OCI-LY7 (cell line): ENCODE measurements at regions of chr13 and their contacts with region 1.

Region 1: GRCh38 chr13:42594970-42595571 is 21.1 kb downstream of the TNFSF11 start:
- DNase-seq: peak; percentile 71
- H3K4me3 ChIP-seq: no peak overlapping the region
- H3K27ac ChIP-seq: no peak overlapping the region
- H3K4me1 ChIP-seq: peaks cover 4% of the 10 kb centered on the region
- CTCF ChIP-seq: peak; percentile 97

Region 2: DNA sequence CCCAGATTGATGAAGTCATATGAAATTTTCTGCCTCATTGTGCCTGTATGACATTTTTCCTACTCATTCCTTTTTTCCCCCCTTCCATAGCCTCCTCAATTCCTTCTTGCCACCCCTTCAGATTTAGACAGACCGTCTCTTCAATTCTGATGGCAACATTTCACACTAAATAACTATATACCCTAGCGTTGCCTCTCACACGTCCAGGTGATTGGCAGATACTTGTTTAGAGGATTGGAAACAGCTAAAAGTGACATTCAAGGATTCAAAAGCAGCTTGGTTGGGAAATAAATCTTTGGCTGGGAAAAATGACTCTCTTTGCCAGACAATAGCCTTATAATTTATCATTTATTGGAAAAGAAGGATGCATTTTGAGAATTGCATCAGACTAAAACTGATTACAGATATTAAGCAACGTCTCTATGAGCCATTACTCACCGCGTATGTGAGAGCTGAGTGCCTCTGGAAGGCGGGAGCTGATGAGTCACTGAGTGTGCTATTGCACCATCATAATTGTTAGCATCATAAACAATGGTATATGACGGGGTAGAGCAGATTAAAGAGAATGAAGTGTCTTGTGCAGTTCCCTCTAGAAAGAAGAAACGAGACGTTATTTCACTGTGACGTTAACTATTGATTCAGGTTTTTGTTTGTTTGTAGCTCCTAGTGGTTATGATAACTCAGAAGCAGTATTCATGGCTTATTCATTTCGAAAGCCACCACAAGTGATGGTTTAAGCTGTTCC is 125.2 kb after region 1 on chr13:
- CTCF ChIA-PET with region 1: no interaction called
- POLR2A ChIA-PET with region 1: no interaction called
- intact Hi-C with region 1: loop called (anchors 10 kb)
- DNase-seq: no peak
- H3K4me3 ChIP-seq: no peak overlapping the region
- H3K27ac ChIP-seq: no peak overlapping the region
- H3K4me1 ChIP-seq: no peaks in the 10 kb centered on the region
- CTCF ChIP-seq: no peak

Region 3: DNA sequence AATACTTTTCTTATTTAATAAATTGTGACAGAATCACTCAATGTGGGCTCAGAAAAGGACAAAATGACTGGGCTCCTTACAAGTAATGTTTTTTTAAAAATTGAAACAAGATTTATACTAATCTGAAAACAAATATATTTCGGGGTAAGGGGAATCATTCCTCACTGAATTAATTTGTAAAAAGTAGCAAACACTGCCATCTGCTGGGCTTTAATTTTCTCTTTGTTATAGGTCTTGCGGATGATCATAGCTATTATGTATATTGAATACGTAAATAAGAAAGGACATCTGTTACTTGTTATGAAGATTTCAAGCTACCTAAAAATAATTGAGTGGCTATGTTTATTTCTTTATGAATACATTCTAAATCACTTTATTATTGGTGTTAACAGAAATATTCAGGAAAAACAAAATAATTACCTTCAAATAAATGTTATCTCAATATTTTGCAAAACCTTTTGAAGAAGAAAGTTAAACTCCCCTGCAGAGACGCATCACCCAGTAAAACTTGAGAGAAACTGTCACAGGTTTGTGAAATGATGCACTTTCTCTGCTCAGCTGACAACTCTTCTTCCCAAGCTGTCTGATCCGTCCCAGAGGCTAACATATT is 1209.5 kb after region 1 on chr13:
- CTCF ChIA-PET with region 1: no interaction called
- POLR2A ChIA-PET with region 1: no interaction called
- intact Hi-C with region 1: loop called (anchors 10 kb)
- DNase-seq: peak; percentile 61
- H3K4me3 ChIP-seq: no peak overlapping the region
- H3K27ac ChIP-seq: no peak overlapping the region
- H3K4me1 ChIP-seq: no peaks in the 10 kb centered on the region
- CTCF ChIP-seq: peak; percentile 88